ENCODE measurements at regions of chr18 and their contacts with region 1.

Region 1: DNA sequence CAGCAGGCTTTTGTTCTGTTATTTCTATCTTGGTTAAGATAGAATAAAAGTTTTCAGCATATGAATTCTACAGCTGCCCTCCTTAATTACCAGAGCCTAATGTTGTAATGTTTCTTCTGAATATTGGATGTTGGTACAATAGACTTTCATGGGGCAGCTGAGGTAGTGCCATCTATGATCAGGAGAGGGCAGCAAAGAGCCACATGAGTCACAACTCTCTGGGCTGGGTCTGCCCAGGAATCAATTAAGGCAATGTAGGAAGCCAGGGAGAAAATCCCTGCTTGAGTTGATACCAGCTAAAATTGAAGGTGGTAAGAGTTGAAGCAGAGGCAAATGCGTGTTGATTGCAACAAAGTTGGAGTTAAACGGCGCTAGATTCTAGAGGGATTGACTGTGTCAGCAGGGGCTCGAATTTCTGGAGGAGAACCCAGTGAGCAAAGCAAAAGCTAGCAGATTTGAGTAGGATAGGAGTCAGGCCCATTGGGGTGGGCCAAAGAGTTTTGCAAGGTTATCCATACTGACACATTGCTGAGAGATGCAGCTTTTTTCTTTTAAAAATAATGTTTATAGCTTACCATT is 10.6 kb upstream of the MC5R start:
- DNase-seq: peak; percentile 75
- H3K4me3 Mint-ChIP-seq: no peak overlapping the region
- H3K27ac Mint-ChIP-seq: no peak overlapping the region
- H3K4me1 Mint-ChIP-seq: no peaks in the 10 kb centered on the region
- H3K27me3 Mint-ChIP-seq: no peaks in the 10 kb centered on the region

Region 2: GRCh38 chr18:13889666-13890065 is 76.3 kb after region 1 on chr18:
- CTCF ChIA-PET with region 1: no interaction called
- intact Hi-C with region 1: no loop called
- DNase-seq: no peak
- H3K4me3 Mint-ChIP-seq: no peak overlapping the region
- H3K27ac Mint-ChIP-seq: no peak overlapping the region
- H3K4me1 Mint-ChIP-seq: no peaks in the 10 kb centered on the region
- H3K27me3 Mint-ChIP-seq: peaks cover 11% of the 10 kb centered on the region

Region 3: DNA sequence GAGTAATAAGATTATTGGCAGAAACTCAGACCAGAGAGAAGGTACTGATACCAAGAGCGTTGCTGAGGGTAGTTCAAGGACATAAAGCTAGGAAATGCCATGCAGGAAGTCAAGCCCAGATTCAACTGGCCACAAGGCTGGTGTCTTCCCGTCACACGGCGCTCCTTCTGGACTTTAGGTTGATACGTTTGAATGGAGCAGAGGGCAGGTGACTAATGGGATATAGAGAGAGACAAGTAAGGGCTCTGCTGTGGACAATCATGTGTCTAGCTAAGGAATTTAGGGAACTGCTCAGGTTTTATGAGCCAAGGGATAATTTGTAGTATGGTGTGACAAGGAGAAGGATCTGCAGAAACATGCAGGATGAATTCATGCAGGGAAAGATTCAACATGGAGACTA is 185.9 kb after region 1 on chr18:
- CTCF ChIA-PET with region 1: no interaction called
- intact Hi-C with region 1: no loop called
- DNase-seq: no peak
- H3K4me3 Mint-ChIP-seq: no peak overlapping the region
- H3K27ac Mint-ChIP-seq: no peak overlapping the region
- H3K4me1 Mint-ChIP-seq: no peaks in the 10 kb centered on the region
- H3K27me3 Mint-ChIP-seq: no peaks in the 10 kb centered on the region

Region 4: GRCh38 chr18:14086458-14087231 is 273.3 kb after region 1 on chr18:
- CTCF ChIA-PET with region 1: interaction called, 47 read pairs
- intact Hi-C with region 1: loop called (anchors 1 kb)
- DNase-seq: peak; percentile 22
- H3K4me3 Mint-ChIP-seq: no peak overlapping the region
- H3K27ac Mint-ChIP-seq: no peak overlapping the region
- H3K4me1 Mint-ChIP-seq: no peaks in the 10 kb centered on the region
- H3K27me3 Mint-ChIP-seq: peaks cover 3% of the 10 kb centered on the region

Measured in activated naive CD4-positive, alpha-beta T cell treated with anti-CD3 and anti-CD28 coated beads for 36 hours (primary cell).